PC-3 (cell line): ENCODE measurements at regions of chr15 and their contacts with region 1.

Region 1: DNA sequence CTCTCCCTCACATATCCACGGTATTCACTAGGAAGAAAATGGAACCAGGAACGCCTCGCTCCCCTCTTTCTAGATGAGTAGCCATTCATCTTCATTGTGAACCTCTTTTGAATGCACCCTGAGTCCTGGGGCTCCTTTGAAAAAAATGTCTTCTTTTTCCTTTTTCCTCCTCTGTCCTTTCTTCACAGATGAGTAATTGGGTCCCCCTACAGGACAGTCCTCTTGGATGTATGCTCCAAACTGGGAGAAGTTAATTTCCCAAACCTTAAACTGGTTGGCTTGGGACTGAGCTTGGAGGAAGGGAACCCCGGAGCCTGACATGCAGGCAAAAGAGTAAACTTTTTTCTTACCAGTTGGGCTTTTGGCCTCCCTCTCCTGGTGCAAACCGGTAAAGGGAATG is 108.8 kb downstream of the DPH6 start:
- DNase-seq: peak; percentile 37
- ATAC-seq: peak; percentile 46; the same call in 1 of the 2 replicates
- H3K4me3 ChIP-seq: no peak overlapping the region
- H3K27ac ChIP-seq: no peak overlapping the region
- H3K4me1 ChIP-seq: no peaks in the 10 kb centered on the region
- H3K27me3 ChIP-seq: no peaks in the 10 kb centered on the region
- CTCF ChIP-seq: peak; percentile 46

Region 2: GRCh38 chr15:35066094-35066493 is 371.1 kb before region 1 on chr15:
- CTCF ChIA-PET with region 1: interaction called, 13 read pairs
- POLR2A ChIA-PET with region 1: no interaction called
- intact Hi-C with region 1: no loop called
- DNase-seq: no peak
- ATAC-seq: no peak
- H3K4me3 ChIP-seq: no peak overlapping the region
- H3K27ac ChIP-seq: no peak overlapping the region
- H3K4me1 ChIP-seq: peaks cover 11% of the 10 kb centered on the region
- H3K27me3 ChIP-seq: no peaks in the 10 kb centered on the region
- CTCF ChIP-seq: no peak